Activated naive CD4-positive, alpha-beta T cell treated with anti-CD3 and anti-CD28 coated beads, Interleukin-2, amount 10 ng/mL, durations not matched to agents 7 days and 5 days (primary cell): ENCODE measurements at regions of chr6 and their contacts with region 1.

Region 1: DNA sequence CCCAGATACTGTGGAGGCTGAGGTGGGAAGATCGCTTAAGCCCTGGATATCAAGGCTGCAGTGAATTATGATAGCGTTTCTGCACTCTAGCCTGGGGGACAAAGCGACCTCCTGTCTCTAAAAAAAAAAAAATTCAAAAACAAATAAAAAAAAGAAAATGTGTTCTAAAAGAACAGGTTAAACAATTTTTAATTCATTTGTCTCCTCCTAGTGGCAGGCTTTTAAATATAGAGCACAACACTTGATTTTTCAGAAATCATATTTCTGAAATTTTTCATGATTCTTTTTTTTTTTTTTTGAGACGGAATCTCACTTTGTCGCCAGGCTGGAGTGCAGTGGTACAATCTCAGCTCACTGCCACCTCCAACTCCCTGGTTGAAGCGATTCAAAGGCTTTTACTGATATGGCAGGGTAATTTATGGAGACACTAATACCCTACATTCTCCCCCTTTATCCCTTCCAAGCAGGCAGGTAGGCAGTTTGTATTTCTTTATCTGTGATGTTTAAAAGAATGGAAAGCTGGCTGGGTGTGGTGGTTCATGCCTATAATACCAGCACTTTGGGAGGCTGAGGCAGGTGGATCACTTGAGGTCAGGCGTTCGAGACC is 8.7 kb upstream of the GTF3C6 start:
- DNase-seq: no peak
- H3K4me3 Mint-ChIP-seq: no peak overlapping the region
- H3K27ac Mint-ChIP-seq: no peak overlapping the region
- H3K4me1 Mint-ChIP-seq: peaks cover 8% of the 10 kb centered on the region
- H3K27me3 Mint-ChIP-seq: peaks cover 12% of the 10 kb centered on the region

Region 2: GRCh38 chr6:110528101-110528929 is 421.5 kb before region 1 on chr6:
- CTCF ChIA-PET with region 1: interaction called, 18 read pairs
- DNase-seq: peak; percentile 69
- H3K4me3 Mint-ChIP-seq: no peak overlapping the region
- H3K27ac Mint-ChIP-seq: no peak overlapping the region
- H3K4me1 Mint-ChIP-seq: peaks cover 2% of the 10 kb centered on the region
- H3K27me3 Mint-ChIP-seq: peaks cover 7% of the 10 kb centered on the region

Region 3: GRCh38 chr6:110682460-110682853 is 267.3 kb before region 1 on chr6:
- CTCF ChIA-PET with region 1: interaction called, 25 read pairs
- DNase-seq: peak; percentile 75
- H3K4me3 Mint-ChIP-seq: no peak overlapping the region
- H3K27ac Mint-ChIP-seq: no peak overlapping the region
- H3K4me1 Mint-ChIP-seq: peaks cover 15% of the 10 kb centered on the region
- H3K27me3 Mint-ChIP-seq: no peaks in the 10 kb centered on the region